Cardiac septum (tissue), 1 donor: ENCODE measurements at regions of chr15 and their contacts with region 1.

Region 1: DNA sequence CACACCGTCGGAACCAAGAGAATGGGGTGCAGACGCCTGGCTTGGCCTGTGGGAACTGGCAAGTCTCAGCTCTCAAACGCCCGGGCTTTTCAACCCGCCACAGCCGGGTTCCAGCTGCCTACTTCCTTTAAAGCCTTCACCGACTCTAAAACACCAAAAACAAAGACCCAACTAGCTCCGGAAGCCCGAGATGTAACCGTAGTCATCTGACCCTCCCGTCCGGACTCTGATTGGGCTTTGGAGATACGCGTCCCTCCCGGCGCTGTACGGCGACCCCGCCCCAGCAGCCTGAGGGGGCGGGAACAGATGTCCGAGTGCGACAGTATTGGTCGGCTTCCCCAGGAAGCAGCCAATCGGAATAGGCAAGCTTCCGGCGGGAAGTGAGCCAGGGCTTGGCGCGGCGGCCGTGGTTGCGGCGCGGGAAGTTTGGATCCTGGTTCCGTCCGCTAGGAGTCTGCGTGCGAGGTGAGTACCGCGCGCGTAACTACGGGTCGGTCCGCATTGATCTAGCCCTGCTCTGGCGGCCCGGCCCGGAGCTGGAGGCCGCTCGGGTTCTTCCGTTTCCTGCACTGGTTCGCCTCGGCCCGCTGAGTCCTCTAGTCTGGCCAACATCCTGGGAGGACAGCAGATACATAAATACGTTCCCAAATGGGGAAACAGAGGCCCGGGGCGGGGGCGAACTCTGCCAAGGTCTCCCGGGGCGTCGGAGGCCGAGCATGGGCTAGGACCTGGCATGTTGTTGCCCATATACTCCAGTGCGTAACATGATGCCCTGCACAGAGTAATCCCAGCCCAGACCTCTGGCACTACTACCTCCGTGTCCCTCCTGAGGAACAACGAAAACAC is at the start of gene BLM:
- DNase-seq: peak; percentile 99
- total RNA-seq, gene BLM: 0.75 TPM

Region 2: GRCh38 chr15:90869601-90870353 is 152.6 kb after region 1 on chr15:
- intact Hi-C with region 1: loop called (anchors 5 kb)
- DNase-seq: peak; percentile 91